ENCODE measurements at regions of chr3 and their contacts with region 1.

Region 1: GRCh38 chr3:187227658-187228258 is 30.5 kb downstream of the RTP1 start:
- DNase-seq: no peak
- ATAC-seq: no peak

Region 2: DNA sequence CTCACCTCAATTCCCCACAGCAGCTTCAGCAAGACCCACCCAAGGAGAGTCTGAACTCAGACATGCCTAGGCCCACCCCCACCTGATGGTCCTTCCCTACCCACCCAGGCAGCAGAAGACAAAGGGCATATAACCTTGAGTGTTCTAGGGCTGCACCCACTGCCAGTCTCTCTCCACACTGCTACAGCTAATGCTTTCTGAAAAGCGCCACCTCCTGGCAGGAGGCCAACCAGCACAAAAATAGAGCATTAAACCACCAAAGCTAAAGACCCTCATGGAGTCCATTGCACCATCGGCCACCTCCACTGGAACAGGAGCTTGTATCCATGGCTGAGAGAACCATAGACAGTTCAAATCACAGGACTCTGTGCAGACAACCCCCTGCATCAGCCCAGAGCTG is 77.2 kb before region 1 on chr3:
- intact Hi-C with region 1: no loop called
- DNase-seq: peak; percentile 53
- ATAC-seq: no peak

Region 3: GRCh38 chr3:187305881-187306280 is 78.1 kb after region 1 on chr3:
- intact Hi-C with region 1: loop called (anchors 10 kb)
- DNase-seq: no peak
- ATAC-seq: no peak

Region 4: GRCh38 chr3:187679638-187680396 is 452.1 kb after region 1 on chr3:
- intact Hi-C with region 1: loop called (anchors 5 kb)
- DNase-seq: peak; percentile 81
- ATAC-seq: peak; percentile 98

Region 5: GRCh38 chr3:187714404-187714979 is 486.7 kb after region 1 on chr3:
- intact Hi-C with region 1: loop called (anchors 10 kb)
- DNase-seq: no peak
- ATAC-seq: peak; percentile 90

Measured in Right ventricle myocardium superior (tissue), 1 donor.